GM12878 (cell line): ENCODE measurements at regions of chr15 and their contacts with region 1.

Region 1: DNA sequence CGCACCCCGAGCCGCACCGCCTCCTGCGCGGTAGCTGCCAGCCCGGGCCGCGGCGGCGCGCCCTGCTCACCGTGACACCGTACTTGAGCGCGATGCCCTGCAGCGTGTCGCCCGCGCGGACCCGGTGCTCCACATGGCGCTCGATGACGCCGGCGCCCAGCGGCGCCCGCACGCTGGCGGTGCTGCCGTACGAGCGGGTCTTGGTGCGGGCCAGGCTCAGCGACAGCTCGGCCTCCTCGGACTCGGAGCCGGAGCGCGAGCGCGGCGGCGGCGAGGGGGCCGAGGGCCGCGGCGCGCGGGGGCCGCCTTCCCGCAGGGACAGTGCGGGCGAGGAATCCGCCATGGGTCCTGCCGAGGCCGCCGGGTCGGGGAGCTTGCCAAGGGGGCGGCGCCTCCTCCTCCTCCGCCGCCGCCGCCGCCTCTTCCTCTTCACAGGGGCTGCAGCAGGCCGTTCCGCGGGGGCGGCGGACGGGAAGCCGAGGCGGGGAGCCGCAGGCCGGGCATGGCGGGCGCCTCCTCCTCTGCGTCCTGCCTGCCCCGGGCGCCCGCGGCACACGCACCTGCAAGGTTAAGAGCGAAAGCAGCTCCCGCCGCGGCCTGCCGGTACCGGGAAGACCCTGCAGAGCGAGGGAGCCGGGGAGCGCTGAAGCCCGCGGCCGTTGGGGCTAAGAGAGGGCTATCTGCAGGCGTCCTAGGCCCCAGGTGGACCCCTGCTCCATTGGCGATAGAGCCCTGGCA is at the start of gene LYSMD2:
- DNase-seq: no peak
- ATAC-seq: peak; percentile 46
- H3K4me3 ChIP-seq: peak within 1 kb of the TSS; percentile 77
- H3K27ac ChIP-seq: peak within 1 kb of the TSS; percentile 94
- H3K4me1 ChIP-seq: peaks cover 25% of the 10 kb centered on the region
- H3K27me3 ChIP-seq: no peaks in the 10 kb centered on the region
- CTCF ChIP-seq: no peak
- EP300 ChIP-seq: no peak; a peak in 1 of 4 replicates
- POLR2A ChIP-seq: peak; percentile 63
- RAD21 ChIP-seq: no peak
- polyA plus RNA-seq, gene LYSMD2: 30.5 to 61.3 TPM

Region 2: GRCh38 chr15:51726351-51727073 is 10.9 kb before region 1 on chr15:
- CTCF ChIA-PET with region 1: interaction called, 5 read pairs
- POLR2A ChIA-PET with region 1: interaction called, 9 read pairs
- RAD21 ChIA-PET with region 1: interaction called, 27 read pairs
- SMC1A ChIA-PET with region 1: interaction called, 9 read pairs
- in situ Hi-C with region 1: no loop called
- intact Hi-C with region 1: no loop called
- DNase-seq: no peak
- ATAC-seq: peak; percentile 91
- H3K4me3 ChIP-seq: no peak overlapping the region; the same call in 1 of the 2 replicates
- H3K27ac ChIP-seq: peak overlapping the region; percentile 72
- H3K4me1 ChIP-seq: peaks cover 32% of the 10 kb centered on the region
- H3K27me3 ChIP-seq: no peaks in the 10 kb centered on the region
- CTCF ChIP-seq: no peak
- EP300 ChIP-seq: no peak
- POLR2A ChIP-seq: no peak
- RAD21 ChIP-seq: 0 out of 2 replicates have a peak, but pooled peaks have one; percentile 12

Region 3: GRCh38 chr15:51801391-51801835 is 64.0 kb after region 1 on chr15:
- CTCF ChIA-PET with region 1: no interaction called
- POLR2A ChIA-PET with region 1: no interaction called
- RAD21 ChIA-PET with region 1: no interaction called
- SMC1A ChIA-PET with region 1: no interaction called
- in situ Hi-C with region 1: no loop called
- intact Hi-C with region 1: no loop called
- DNase-seq: no peak
- ATAC-seq: peak; percentile 83
- H3K4me3 ChIP-seq: no peak overlapping the region
- H3K27ac ChIP-seq: no peak overlapping the region
- H3K4me1 ChIP-seq: no peaks in the 10 kb centered on the region; the same call in 1 of the 2 replicates
- H3K27me3 ChIP-seq: no peaks in the 10 kb centered on the region
- CTCF ChIP-seq: peak; percentile 38 to 64 (median 55)
- EP300 ChIP-seq: no peak
- POLR2A ChIP-seq: no peak
- RAD21 ChIP-seq: 0 out of 2 replicates have a peak, but pooled peaks have one; percentile 4